A673 (cell line): ENCODE measurements at regions of chr1 and their contacts with region 1.

Region 1: GRCh38 chr1:159144571-159144970 is 26.8 kb upstream of the CADM3 start:
- DNase-seq: no peak
- H3K4me3 ChIP-seq: no peak overlapping the region
- H3K27ac ChIP-seq: no peak overlapping the region
- H3K4me1 ChIP-seq: no peaks in the 10 kb centered on the region
- H3K27me3 ChIP-seq: peaks cover 78% of the 10 kb centered on the region
- CTCF ChIP-seq: no peak

Region 2: GRCh38 chr1:159122005-159122621 is 22.5 kb before region 1 on chr1:
- CTCF ChIA-PET with region 1: no interaction called
- POLR2A ChIA-PET with region 1: no interaction called
- intact Hi-C with region 1: loop called (anchors 2 kb)
- DNase-seq: no peak
- H3K4me3 ChIP-seq: no peak overlapping the region
- H3K27ac ChIP-seq: no peak overlapping the region
- H3K4me1 ChIP-seq: no peaks in the 10 kb centered on the region
- H3K27me3 ChIP-seq: peaks cover 57% of the 10 kb centered on the region
- CTCF ChIP-seq: no peak

Region 3: DNA sequence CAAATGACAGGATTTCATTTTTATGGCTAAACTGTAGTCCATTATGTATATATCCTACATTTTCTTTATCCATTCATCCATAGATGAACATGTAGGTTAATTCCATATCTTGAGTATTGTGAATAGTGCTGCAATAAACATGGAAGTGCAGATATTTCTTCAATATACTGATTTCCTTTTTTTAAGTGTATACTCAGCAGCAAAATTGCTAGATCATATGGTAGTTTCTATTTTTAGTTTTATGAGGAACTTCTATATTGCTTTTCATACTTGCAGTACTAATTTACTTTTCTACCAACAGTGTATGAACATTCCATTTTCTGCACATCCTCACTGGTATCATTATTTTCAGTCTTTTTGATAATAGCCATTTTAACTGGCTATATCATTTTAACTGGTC is 361.1 kb after region 1 on chr1:
- CTCF ChIA-PET with region 1: no interaction called
- POLR2A ChIA-PET with region 1: no interaction called
- intact Hi-C with region 1: no loop called
- DNase-seq: no peak
- H3K4me3 ChIP-seq: no peak overlapping the region
- H3K27ac ChIP-seq: no peak overlapping the region
- H3K4me1 ChIP-seq: no peaks in the 10 kb centered on the region
- H3K27me3 ChIP-seq: peaks cover 11% of the 10 kb centered on the region
- CTCF ChIP-seq: no peak